Dorsolateral prefrontal cortex (tissue), 120 donors: ENCODE measurements at regions of chr6 and their contacts with region 1.

Region 1: DNA sequence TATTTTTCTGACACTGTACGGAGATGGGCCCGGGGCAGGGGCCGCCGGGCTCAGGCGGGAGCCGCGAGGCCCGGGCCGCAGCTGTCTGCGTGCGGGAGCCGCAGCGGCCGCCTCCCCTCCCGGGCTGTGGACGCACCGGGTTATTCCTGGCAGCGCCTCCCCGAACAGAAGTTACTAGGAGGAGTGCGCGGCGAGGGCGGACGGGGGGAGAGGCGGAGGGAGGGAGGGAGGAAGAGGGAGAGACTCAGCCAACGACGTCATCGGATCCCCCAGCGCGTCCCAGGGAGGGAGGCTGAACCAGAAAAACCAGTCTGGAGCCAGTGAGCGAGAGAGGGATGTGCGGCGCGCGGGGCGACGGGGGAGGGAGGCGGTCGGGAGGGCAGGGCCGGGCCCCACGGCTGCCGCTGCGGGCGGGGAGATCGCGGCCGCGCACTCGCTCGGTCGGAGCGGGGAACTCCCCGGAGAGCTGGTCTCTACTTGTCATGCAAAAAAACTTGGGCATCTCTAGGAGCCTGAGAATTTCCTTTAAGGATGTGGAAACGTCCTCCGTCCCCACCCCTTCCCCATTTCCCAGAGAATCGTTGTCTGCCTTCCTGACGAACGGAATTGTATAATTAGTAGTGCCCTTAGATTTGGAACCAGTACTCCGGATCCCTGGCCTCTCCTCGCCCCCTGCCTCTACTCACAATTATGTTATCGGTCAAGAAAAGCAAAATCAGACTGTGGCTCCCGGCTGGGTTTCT is 1.4 kb upstream of the HIVEP2 start:
- DNase-seq: peak; percentile 89 to 98 (median 96)
- H3K4me3 ChIP-seq: peak overlapping the region; percentile 50 to 98 (median 91)
- H3K27ac ChIP-seq: peak overlapping the region; percentile 94 to 100 (median 98)
- H3K27me3 ChIP-seq: peaks cover 0 to 2% (median 0%) of the 10 kb centered on the region in 45 donors
- CTCF ChIP-seq: peak in 5 of 56 donors; percentile 2 to 26 (median 18)

Region 2: GRCh38 chr6:142845624-142846458 is 100.5 kb before region 1 on chr6:
- intact Hi-C with region 1: loop called in 1 of 2 experiments (anchors 10 kb)
- DNase-seq: peak; percentile 64 to 89 (median 76)
- H3K4me3 ChIP-seq: peak overlapping the region; percentile 4 to 69 (median 49)
- H3K27ac ChIP-seq: peak overlapping the region in 57 of 59 donors; percentile 16 to 89 (median 81)
- H3K27me3 ChIP-seq: no peaks in the 10 kb centered on the region
- CTCF ChIP-seq: peak in 29 of 56 donors; percentile 7 to 46 (median 24)

Region 3: DNA sequence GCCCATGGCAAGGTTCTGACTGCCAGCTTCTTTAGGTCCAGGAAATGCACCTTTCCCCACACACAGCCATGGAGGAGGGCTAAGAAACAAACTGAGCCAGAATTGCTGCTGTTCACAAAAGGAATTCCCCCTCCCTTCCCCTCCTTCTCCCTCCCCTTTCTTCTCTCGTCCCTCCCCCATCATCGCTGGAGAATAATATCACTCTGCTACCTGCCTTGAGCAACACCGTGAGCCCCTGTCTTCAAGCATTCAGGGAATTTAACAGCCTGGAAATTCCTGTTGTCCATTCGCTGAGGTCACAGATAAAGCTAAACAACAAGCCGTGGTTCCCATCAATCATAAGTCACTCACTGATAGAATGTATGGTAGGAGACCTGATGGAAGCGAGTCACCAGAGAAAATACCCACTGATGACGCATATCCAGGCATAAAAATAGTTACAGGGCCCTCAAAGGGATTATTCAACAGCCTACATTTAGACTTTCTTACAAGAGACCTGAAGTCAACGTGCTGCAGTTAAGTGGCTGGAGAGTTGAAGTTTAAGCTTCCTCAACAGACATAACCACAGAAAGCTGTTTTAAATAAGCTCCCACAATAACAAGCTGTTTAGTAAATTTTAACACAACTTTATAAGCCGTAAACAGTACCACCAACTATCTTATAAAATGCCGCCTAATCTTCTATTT is 61.0 kb before region 1 on chr6:
- intact Hi-C with region 1: loop called (anchors 2 to 5 kb)
- DNase-seq: no peak
- H3K4me3 ChIP-seq: peak overlapping the region in 58 of 59 donors; percentile 3 to 61 (median 48)
- H3K27ac ChIP-seq: peak overlapping the region in 50 of 59 donors; percentile 2 to 82 (median 54)
- H3K27me3 ChIP-seq: no peaks in the 10 kb centered on the region
- CTCF ChIP-seq: no peak

Region 4: DNA sequence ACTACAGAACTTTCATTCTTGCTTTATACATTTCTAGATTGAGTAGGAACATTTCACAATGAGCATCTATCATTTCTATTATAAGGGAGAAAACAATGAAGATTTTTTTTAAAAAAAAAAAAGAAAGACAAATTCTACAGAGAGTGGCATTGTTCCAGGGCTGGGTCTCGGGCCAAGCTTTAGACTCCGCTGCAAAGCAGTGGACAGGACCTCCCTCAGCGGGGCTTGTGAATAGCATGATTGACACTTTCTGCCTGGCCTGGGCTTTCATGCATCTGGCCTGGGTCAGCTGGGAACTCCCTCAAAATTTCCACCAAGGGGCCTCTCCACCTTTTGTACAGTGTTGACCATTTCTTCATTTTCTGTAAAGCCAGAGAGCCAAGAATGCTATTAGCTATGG is 54.5 kb after region 1 on chr6:
- intact Hi-C with region 1: loop called (anchors 5 kb)
- DNase-seq: peak; percentile 11 to 84 (median 64)
- H3K4me3 ChIP-seq: peak overlapping the region in 6 of 59 donors; percentile 2 to 33 (median 16)
- H3K27ac ChIP-seq: peak overlapping the region in 49 of 59 donors; percentile 6 to 86 (median 59)
- H3K27me3 ChIP-seq: no peaks in the 10 kb centered on the region
- CTCF ChIP-seq: peak in 3 of 56 donors; percentile 16 to 18 (median 17)